MCF 10A (cell line): ENCODE measurements at regions of chr1 and their contacts with region 1.

Region 1: DNA sequence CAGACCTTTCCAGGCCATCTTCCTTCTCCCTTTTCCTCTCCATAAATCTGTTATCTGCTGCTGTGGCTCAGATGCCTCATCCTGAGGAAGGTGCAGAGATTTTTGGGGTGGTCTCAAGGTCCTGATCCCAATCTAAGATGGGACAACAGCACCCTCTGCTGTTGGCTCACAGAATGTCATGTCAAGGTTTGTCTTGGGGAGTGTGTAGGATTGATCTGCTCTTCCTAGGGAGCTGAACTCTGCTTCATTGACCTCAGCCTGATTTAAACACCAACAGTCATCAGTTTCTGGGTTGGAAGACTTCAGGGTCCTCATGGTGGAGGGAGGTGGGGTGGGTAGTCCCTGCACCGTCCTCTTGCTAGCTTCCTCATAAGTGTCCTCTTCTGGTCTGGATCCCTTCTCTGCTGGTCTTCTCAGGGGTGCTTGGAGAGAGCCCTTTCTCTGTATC is 62.8 kb upstream of the LAX1 start:
- DNase-seq: peak; percentile 83
- H3K4me3 Mint-ChIP-seq: no peak overlapping the region
- H3K27ac Mint-ChIP-seq: no peak overlapping the region
- H3K4me1 Mint-ChIP-seq: peaks cover 16% of the 10 kb centered on the region
- H3K27me3 Mint-ChIP-seq: no peaks in the 10 kb centered on the region
- CTCF ChIP-seq: peak; percentile 100

Region 2: GRCh38 chr1:203273206-203273868 is 428.8 kb before region 1 on chr1:
- CTCF ChIA-PET with region 1: interaction called, 27 read pairs
- POLR2A ChIA-PET with region 1: interaction called, 3 read pairs
- intact Hi-C with region 1: loop called (anchors 1 kb)
- DNase-seq: peak; percentile 96
- H3K4me3 Mint-ChIP-seq: peak overlapping the region; percentile 28
- H3K27ac Mint-ChIP-seq: no peak overlapping the region
- H3K4me1 Mint-ChIP-seq: peaks cover 3% of the 10 kb centered on the region
- H3K27me3 Mint-ChIP-seq: no peaks in the 10 kb centered on the region
- CTCF ChIP-seq: peak; percentile 100

Region 3: GRCh38 chr1:203299169-203299568 is 403.0 kb before region 1 on chr1:
- CTCF ChIA-PET with region 1: no interaction called
- POLR2A ChIA-PET with region 1: no interaction called
- intact Hi-C with region 1: no loop called
- DNase-seq: no peak
- H3K4me3 Mint-ChIP-seq: no peak overlapping the region
- H3K27ac Mint-ChIP-seq: no peak overlapping the region
- H3K4me1 Mint-ChIP-seq: peaks cover 11% of the 10 kb centered on the region
- H3K27me3 Mint-ChIP-seq: peaks cover 10% of the 10 kb centered on the region
- CTCF ChIP-seq: no peak

Region 4: DNA sequence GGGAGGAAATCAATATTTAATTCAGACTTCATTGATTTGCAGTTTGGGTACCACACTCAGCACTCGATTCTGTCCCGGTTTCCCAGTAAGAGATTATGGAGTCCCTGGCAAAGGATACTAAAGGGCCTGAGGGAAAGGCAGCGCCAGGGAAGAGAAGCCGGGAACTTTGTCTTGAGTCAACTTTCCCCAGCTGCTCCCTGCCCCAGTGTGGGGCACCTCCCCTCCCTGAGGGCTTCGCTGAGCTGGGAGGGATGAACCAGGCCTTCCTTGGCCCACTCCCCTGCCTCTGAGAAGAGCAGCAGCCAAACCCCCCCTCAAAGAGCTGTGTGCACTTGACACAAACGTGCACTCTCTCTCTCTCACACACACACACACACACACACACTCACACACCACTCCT is 175.6 kb before region 1 on chr1:
- CTCF ChIA-PET with region 1: interaction called, 17 read pairs
- POLR2A ChIA-PET with region 1: no interaction called
- intact Hi-C with region 1: no loop called
- DNase-seq: peak; percentile 60
- H3K4me3 Mint-ChIP-seq: no peak overlapping the region
- H3K27ac Mint-ChIP-seq: no peak overlapping the region
- H3K4me1 Mint-ChIP-seq: peaks cover 19% of the 10 kb centered on the region
- H3K27me3 Mint-ChIP-seq: no peaks in the 10 kb centered on the region
- CTCF ChIP-seq: no peak

Region 5: DNA sequence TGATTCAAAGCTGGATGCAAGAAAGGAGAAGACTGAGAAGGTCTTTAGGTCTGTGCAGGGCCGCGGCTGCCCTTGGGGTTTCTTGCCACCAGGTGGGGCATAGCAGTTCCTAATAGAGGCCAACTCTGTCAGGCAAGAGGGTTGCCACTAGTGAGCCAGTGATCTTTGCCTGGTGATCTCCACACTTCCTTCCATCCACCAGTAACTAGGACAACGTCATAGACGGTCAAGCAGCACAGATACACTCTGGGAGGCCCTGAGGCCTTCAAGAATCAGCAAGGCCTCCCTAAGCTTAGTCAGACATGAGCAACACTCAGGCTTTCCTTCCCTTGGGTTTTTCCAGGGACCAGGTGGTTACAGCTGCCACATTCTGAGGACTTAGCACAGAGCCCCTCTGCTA is 108.4 kb before region 1 on chr1:
- CTCF ChIA-PET with region 1: no interaction called
- POLR2A ChIA-PET with region 1: no interaction called
- intact Hi-C with region 1: loop called (anchors 1 kb)
- DNase-seq: peak; percentile 54
- H3K4me3 Mint-ChIP-seq: no peak overlapping the region
- H3K27ac Mint-ChIP-seq: no peak overlapping the region
- H3K4me1 Mint-ChIP-seq: peaks cover 10% of the 10 kb centered on the region
- H3K27me3 Mint-ChIP-seq: peaks cover 11% of the 10 kb centered on the region
- CTCF ChIP-seq: peak; percentile 34

Region 6: GRCh38 chr1:203720262-203720661 is 18.1 kb after region 1 on chr1:
- CTCF ChIA-PET with region 1: interaction called, 51 read pairs
- POLR2A ChIA-PET with region 1: no interaction called
- intact Hi-C with region 1: no loop called
- DNase-seq: no peak
- H3K4me3 Mint-ChIP-seq: no peak overlapping the region
- H3K27ac Mint-ChIP-seq: no peak overlapping the region
- H3K4me1 Mint-ChIP-seq: no peaks in the 10 kb centered on the region
- H3K27me3 Mint-ChIP-seq: no peaks in the 10 kb centered on the region
- CTCF ChIP-seq: no peak

Region 7: GRCh38 chr1:203795441-203796235 is 93.5 kb after region 1 on chr1 and contains the starts of genes ZBED6 and ZC3H11A:
- CTCF ChIA-PET with region 1: interaction called, 18 read pairs
- POLR2A ChIA-PET with region 1: interaction called, 4 read pairs
- intact Hi-C with region 1: no loop called
- DNase-seq: peak; percentile 100
- H3K4me3 Mint-ChIP-seq: peak within 1 kb of the TSS; percentile 86
- H3K27ac Mint-ChIP-seq: peak within 1 kb of the TSS; percentile 98
- H3K4me1 Mint-ChIP-seq: peaks cover 44% of the 10 kb centered on the region
- H3K27me3 Mint-ChIP-seq: no peaks in the 10 kb centered on the region
- CTCF ChIP-seq: no peak
- total RNA-seq, gene ZBED6: 68.2 and 69.8 TPM in 2 replicates
- total RNA-seq, gene ZC3H11A: 148 and 156 TPM in 2 replicates